Heart left ventricle (tissue), 16 donors: ENCODE measurements at regions of chr11 and their contacts with region 1.

Region 1: GRCh38 chr11:73141848-73142286 is 251 bp downstream of the FCHSD2 start:
- DNase-seq: peak; percentile 80 to 90 (median 84)
- ATAC-seq: peak in 3 of 4 donors; percentile 38 to 65 (median 53)
- H3K4me3 ChIP-seq: peak overlapping the region; percentile 65 to 97 (median 92)
- H3K27ac ChIP-seq: peak overlapping the region; percentile 91 to 99 (median 98)
- H3K4me1 ChIP-seq: peaks cover 2 to 66% (median 44%) of the 10 kb centered on the region in 12 donors
- H3K27me3 ChIP-seq: no peaks in the 10 kb centered on the region
- CTCF ChIP-seq: no peak
- POLR2A ChIP-seq: peak in 1 of 2 donors; percentile 48

Region 2: GRCh38 chr11:71971680-71972079 is 1170.2 kb before region 1 on chr11:
- intact Hi-C with region 1: no loop called
- DNase-seq: no peak
- ATAC-seq: no peak
- H3K4me3 ChIP-seq: no peak overlapping the region
- H3K27ac ChIP-seq: no peak overlapping the region
- H3K4me1 ChIP-seq: no peaks in the 10 kb centered on the region
- H3K27me3 ChIP-seq: no peaks in the 10 kb centered on the region
- CTCF ChIP-seq: no peak
- POLR2A ChIP-seq: no peak

Region 3: DNA sequence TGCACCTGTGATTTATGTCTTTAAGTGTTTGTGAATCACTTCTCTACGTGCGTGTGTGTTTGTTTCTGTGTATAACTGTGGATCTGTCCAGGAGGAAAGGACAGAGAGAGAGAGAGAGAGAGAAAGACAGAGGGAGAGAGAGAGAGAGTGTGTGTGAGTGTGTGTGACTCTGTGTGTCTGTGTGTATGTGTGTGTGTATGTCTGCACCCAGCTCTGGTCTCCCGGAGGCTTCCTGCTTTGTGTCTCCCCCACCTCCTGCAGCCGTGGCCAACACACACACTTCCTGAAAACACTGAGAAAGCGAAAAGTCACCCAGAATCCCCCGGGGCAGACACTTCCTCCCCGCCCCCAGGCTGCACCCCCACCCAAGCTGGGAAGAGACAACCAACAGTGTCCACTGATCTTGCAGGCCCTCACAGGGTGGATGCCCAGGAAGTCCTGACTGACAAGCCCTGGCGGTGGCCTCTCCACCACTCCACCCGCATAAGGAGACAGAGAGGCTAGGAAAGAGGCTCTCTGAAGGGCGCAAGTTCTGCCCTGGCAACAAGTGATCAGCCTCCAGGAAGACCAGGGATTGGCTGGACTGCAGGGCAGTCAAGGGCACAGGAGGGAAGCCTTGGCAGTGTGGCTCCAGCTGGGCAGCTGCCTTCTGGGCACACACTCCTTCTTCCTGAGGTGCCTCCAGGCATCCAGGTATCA is 419.7 kb before region 1 on chr11:
- intact Hi-C with region 1: loop called in 1 of 10 experiments (anchors 10 kb)
- DNase-seq: peak; percentile 91 to 94 (median 92)
- ATAC-seq: peak; percentile 79 to 84 (median 81)
- H3K4me3 ChIP-seq: peak overlapping the region; percentile 25 to 86 (median 71)
- H3K27ac ChIP-seq: peak overlapping the region; percentile 82 to 98 (median 92)
- H3K4me1 ChIP-seq: peaks cover 3 to 84% (median 47%) of the 10 kb centered on the region in 12 donors
- H3K27me3 ChIP-seq: no peaks in the 10 kb centered on the region
- CTCF ChIP-seq: no peak
- POLR2A ChIP-seq: peak in 1 of 2 donors; percentile 66

Region 4: DNA sequence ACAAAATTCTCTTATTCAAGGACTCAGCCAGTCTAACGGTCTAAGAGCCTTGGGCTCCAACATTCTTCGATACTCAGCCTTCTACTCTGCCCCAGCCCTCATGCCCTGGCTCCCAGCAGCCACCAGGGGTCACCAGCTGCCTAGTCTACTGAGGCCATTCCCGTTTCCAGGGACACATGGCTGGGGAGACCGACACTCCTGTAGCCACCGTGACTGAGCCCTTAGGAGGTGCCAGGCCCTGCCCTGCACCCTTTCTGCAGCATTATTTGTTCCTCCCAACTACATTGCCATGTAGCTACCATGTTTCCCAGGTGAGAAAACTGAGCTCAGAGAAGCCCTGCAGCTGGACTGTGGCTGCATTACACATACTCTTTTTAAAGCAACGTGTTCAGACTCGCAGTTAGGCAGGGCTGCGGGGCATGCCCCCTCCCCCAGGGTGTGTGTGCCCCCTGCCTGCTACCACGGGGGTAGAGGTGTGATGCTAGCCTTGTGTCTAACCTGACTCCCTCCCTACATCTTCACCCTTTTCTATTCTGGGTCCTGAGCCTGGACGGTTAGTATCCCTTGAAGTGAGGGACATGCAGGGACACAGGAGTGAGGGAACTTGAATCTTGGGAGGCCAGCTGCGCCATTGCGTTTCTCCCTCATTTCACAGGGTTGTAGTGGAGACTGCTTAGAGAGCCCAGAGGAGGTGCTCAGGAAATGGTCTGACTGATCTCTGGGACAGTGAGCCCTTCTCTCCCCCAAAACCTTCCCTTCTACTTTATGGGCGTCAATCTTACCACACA is 310.2 kb before region 1 on chr11:
- intact Hi-C with region 1: loop called in 6 of 10 experiments (anchors 2 to 10 kb)
- DNase-seq: peak; percentile 85 to 91 (median 88)
- ATAC-seq: peak; percentile 73 to 81 (median 76)
- H3K4me3 ChIP-seq: no peak overlapping the region
- H3K27ac ChIP-seq: peak overlapping the region; percentile 80 to 98 (median 90)
- H3K4me1 ChIP-seq: peaks cover 39 to 85% (median 61%) of the 10 kb centered on the region in 12 donors
- H3K27me3 ChIP-seq: no peaks in the 10 kb centered on the region
- CTCF ChIP-seq: peak; percentile 91 to 99 (median 97)
- POLR2A ChIP-seq: no peak

Region 5: DNA sequence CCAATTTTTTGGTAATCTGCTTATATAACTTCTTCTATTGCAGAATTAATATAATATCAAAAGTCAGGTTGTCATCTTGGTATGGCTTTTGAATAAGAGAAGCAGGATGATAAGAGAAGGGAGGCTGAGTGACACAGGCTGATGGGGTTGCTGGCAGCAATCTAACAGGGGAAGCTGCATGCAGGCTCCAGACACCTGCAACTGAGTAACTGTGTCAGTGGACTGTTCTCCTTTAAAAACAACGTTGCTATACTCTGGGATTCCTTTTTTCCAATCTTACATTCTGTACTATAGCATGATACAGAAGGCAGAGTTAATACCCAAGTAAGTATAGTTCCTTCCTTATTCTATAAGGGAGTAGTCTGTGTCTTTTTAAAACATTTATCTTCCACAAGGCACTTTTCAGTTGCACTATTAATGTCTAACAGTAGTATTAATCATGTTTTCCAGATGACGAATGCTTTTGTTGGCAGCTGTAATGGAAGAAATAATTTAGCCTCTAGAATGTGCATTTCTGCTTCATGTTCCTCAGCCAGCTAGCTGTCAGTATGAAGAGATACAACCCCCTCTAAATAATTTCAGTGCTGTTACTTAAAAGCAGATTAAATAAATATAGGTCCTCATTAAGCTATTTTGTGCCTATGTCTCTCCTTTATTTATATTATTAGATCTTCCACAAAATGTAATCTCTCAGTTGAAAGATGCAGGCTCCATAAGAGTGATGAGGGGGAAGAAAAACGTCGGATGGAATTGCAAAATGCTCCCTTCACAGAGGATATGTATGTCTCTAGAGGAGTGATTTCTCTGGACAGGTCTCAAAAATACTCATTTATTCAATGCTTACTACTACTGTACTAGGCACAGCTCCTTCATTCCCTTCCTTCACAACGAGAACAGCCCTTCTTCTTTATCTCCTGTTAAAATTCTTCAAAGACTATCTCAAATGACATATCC is 276.9 kb before region 1 on chr11:
- intact Hi-C with region 1: loop called in 1 of 10 experiments (anchors 5 kb)
- DNase-seq: peak in 4 of 5 donors; percentile 33 to 61 (median 46)
- ATAC-seq: peak; percentile 75 to 89 (median 86)
- H3K4me3 ChIP-seq: no peak overlapping the region
- H3K27ac ChIP-seq: peak overlapping the region; percentile 25 to 79 (median 62)
- H3K4me1 ChIP-seq: peaks cover 3 to 48% (median 39%) of the 10 kb centered on the region in 12 donors
- H3K27me3 ChIP-seq: no peaks in the 10 kb centered on the region
- CTCF ChIP-seq: no peak
- POLR2A ChIP-seq: no peak

Region 6: GRCh38 chr11:72924568-72925190 is 217.2 kb before region 1 on chr11:
- intact Hi-C with region 1: loop called in 5 of 10 experiments (anchors 5 to 10 kb)
- DNase-seq: no peak
- ATAC-seq: peak in 3 of 4 donors; percentile 33 to 58 (median 52)
- H3K4me3 ChIP-seq: no peak overlapping the region
- H3K27ac ChIP-seq: peak overlapping the region in 1 of 12 donors; percentile 3
- H3K4me1 ChIP-seq: peaks cover 0 to 60% (median 25%) of the 10 kb centered on the region in 12 donors
- H3K27me3 ChIP-seq: no peaks in the 10 kb centered on the region
- CTCF ChIP-seq: peak; percentile 36 to 74 (median 59)
- POLR2A ChIP-seq: no peak

Region 7: DNA sequence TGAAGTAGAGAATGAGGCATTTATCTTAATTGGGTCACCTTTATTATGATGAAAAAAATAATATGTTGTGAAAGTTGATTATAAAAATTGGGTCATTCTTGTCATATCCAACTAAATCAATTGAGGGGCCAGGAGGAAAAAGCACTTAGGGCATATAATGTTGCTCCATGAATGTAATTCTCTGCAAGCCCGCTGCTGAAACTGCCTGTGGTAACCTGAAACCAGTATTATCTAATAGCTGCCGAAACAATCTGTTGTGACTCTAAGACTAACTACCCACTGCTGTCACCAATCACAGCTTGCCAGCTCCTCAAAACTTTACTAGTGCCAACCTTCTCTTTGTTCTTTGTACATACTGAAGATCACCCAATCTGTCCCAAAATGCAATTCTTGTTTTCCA is 211.9 kb before region 1 on chr11:
- intact Hi-C with region 1: loop called in 4 of 10 experiments (anchors 5 to 10 kb)
- DNase-seq: no peak
- ATAC-seq: peak in 3 of 4 donors; percentile 58 to 73 (median 66)
- H3K4me3 ChIP-seq: no peak overlapping the region
- H3K27ac ChIP-seq: no peak overlapping the region
- H3K4me1 ChIP-seq: peaks cover 0 to 49% (median 20%) of the 10 kb centered on the region in 12 donors
- H3K27me3 ChIP-seq: no peaks in the 10 kb centered on the region
- CTCF ChIP-seq: no peak
- POLR2A ChIP-seq: no peak

Region 8: DNA sequence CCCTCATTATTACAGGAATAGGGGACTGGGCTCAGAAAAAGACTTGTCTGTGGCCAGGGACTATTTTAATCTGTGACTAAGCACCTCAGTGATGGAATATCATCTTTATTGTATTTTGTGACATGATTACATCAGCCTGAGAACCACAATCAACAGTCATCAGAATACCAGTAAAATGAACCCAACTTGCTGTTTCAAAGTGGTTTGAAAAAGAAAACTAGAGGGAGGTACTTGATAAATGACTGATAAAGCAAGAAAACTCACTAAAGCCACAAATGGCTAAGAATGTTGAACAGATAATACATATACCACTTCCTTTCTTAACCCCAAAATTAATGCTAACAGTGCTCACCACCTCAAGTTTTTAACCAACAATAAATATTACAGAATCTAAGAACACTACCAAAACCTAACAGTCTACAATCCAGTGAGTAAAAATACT is 172.0 kb before region 1 on chr11:
- intact Hi-C with region 1: loop called in 1 of 10 experiments (anchors 10 kb)
- DNase-seq: no peak
- ATAC-seq: no peak
- H3K4me3 ChIP-seq: no peak overlapping the region
- H3K27ac ChIP-seq: peak overlapping the region in 1 of 12 donors; percentile 71
- H3K4me1 ChIP-seq: peaks cover 0 to 60% (median 12%) of the 10 kb centered on the region in 12 donors
- H3K27me3 ChIP-seq: no peaks in the 10 kb centered on the region
- CTCF ChIP-seq: no peak
- POLR2A ChIP-seq: no peak

Region 9: DNA sequence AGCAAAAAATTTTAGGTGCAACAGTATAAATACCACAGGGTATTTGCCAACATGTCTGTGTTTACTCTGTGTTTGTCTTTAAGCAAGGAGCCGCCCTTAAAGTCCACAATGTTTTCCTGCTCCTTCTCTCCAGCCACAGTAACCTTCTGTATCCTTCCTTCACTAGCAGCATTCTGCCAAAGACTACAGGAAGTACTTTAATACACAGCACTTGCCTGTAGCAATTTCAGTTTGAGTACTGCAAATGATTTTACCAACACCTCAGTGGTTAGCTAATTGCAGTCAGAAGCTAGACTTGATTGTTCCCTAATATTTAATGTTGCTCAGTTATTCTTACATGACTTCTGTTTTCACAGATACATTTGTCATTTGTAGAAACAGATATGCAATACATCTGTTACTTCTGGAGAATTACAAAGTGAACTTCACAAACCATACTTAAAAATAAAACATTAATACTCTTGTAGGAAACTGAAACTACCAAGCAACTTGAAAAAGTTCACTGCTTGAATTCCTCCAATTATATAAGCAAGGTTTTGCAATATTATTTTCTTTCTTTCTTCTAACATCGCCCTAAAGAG is 68.9 kb before region 1 on chr11:
- intact Hi-C with region 1: no loop called
- DNase-seq: no peak
- ATAC-seq: peak; percentile 77 to 84 (median 82)
- H3K4me3 ChIP-seq: peak overlapping the region in 8 of 12 donors; percentile 1 to 18 (median 8)
- H3K27ac ChIP-seq: peak overlapping the region; percentile 4 to 61 (median 25)
- H3K4me1 ChIP-seq: peaks cover 5 to 51% (median 30%) of the 10 kb centered on the region in 12 donors
- H3K27me3 ChIP-seq: no peaks in the 10 kb centered on the region
- CTCF ChIP-seq: no peak
- POLR2A ChIP-seq: no peak

Region 10: DNA sequence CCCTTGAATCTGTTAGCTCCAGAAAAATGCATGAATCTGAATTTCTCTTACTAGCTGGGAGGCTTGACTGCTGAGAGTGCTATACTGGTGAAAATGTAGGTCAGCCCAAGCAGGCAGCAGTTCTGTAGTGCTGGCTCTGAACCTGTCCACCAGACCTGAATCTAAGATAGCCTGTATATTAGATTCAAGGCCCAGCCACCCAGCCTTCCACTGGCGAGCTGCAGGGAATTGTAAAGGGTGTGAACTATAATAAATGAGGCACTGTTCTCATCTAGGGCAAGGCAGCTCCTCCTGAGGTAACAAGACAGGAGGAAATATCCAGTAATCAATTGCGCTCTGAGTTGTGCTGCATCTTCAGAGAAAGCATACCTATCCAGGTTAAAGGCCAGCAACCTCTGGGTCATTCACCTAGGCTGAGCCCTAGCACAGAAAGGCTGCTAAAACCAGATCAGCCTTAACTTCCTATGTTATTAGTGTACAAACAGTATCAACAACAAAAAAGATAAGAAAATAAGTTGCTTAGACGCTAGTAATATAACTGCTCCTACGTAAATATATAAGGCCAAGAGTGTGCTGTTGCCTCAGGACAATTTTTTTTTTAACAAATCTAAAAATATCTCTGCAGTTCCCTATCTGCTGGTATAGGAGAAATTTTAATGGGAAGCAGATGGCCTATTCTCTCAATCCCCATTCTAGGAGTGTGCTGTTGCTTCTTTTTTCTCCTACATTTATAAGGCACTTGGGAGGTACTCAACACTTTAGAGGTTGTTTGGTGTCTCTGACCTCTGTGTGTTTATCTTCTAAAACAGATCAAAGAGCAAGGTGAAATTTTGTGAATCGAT is 297.4 kb after region 1 on chr11:
- intact Hi-C with region 1: no loop called
- DNase-seq: no peak
- ATAC-seq: peak; percentile 12 to 54 (median 46)
- H3K4me3 ChIP-seq: no peak overlapping the region
- H3K27ac ChIP-seq: peak overlapping the region in 5 of 12 donors; percentile 7 to 61 (median 21)
- H3K4me1 ChIP-seq: peaks cover 0 to 33% (median 19%) of the 10 kb centered on the region in 12 donors
- H3K27me3 ChIP-seq: no peaks in the 10 kb centered on the region
- CTCF ChIP-seq: no peak
- POLR2A ChIP-seq: no peak